Activated B cell treated with CpG ODN at 0.5 μM for 24 hours (primary cell): ENCODE measurements at regions of chr11 and their contacts with region 1.

Region 1: DNA sequence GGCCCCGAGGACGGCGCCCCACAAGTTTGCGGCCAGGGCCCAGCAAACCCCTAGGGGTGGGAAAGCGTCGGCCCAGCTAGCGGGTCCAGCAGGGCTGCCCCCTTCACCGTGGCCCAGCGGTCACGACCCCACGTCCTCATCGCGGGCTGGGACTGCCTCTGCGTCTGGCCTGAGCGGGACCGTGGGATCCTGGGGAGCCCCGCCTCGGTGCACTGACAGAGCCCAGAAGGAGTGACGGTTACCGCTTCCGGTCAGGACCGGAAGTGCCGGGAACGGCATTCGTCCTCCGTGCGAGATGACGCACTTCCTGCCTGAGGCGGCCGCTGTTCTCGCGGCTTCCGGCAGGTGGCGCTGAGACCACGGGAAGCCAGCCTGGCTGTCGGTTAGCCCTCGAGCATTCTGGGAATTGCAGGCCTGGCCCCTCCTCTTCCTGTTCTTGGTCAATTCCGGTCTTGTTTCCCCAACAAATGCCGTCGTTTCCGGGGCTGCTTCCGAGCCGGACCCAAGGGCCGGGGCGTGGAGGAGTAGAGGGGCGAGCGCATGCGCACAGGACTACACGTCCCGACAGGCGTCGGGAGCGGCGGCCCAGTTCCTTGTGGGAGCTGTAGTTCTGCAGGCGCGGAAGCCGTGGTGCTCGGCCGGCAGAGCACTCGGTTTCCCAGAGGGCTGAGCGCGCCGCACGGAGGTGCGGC is at the start of gene TSSC4:
- DNase-seq: peak; percentile 100
- ATAC-seq: peak; percentile 86
- H3K4me3 Mint-ChIP-seq: peak within 1 kb of the TSS; percentile 88
- H3K27ac Mint-ChIP-seq: peak within 1 kb of the TSS; percentile 83
- H3K4me1 Mint-ChIP-seq: peaks cover 27% of the 10 kb centered on the region
- H3K27me3 Mint-ChIP-seq: no peaks in the 10 kb centered on the region
- CTCF ChIP-seq: peak; percentile 73
- total RNA-seq, gene TSSC4: 59.4 and 59.7 TPM in 2 replicates

Region 2: GRCh38 chr11:1437500-1437899 is 962.7 kb before region 1 on chr11:
- CTCF ChIA-PET with region 1: no interaction called
- POLR2A ChIA-PET with region 1: no interaction called
- intact Hi-C with region 1: no loop called
- DNase-seq: no peak
- ATAC-seq: no peak
- H3K4me3 Mint-ChIP-seq: no peak overlapping the region
- H3K27ac Mint-ChIP-seq: no peak overlapping the region
- H3K4me1 Mint-ChIP-seq: no peaks in the 10 kb centered on the region
- H3K27me3 Mint-ChIP-seq: no peaks in the 10 kb centered on the region
- CTCF ChIP-seq: no peak

Region 3: DNA sequence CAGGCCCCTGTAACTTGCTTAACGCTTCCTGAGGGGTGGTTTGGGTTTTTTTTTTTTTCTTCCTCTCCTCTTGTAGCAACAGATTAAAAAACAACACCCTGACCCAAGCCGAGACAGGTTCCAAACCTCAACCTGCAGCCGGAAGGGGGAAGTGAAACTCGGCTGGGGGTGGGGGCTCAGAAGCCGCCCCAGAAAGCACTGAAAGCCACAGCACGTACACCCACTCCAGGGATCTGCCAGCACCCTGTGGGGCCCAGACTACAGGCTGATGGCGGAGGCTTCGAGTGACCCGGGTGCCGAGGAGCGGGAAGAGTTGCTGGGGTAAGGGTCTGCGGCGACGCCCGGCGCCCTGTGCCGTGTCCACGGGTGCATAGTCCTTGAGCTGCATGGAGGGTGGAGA is 547.3 kb before region 1 on chr11 and contains the start of gene LSP1:
- CTCF ChIA-PET with region 1: no interaction called
- POLR2A ChIA-PET with region 1: no interaction called
- intact Hi-C with region 1: loop called (anchors 2 kb)
- DNase-seq: peak; percentile 83
- ATAC-seq: peak; percentile 64
- H3K4me3 Mint-ChIP-seq: peak within 1 kb of the TSS; percentile 99
- H3K27ac Mint-ChIP-seq: peak within 1 kb of the TSS; percentile 98
- H3K4me1 Mint-ChIP-seq: peaks cover 84% of the 10 kb centered on the region
- H3K27me3 Mint-ChIP-seq: no peaks in the 10 kb centered on the region
- CTCF ChIP-seq: no peak
- total RNA-seq, gene LSP1: 301 and 303 TPM in 2 replicates

Region 4: GRCh38 chr11:2298795-2299761 is 101.1 kb before region 1 on chr11:
- CTCF ChIA-PET with region 1: interaction called, 5 read pairs
- POLR2A ChIA-PET with region 1: interaction called, 23 read pairs
- intact Hi-C with region 1: no loop called
- DNase-seq: peak; percentile 23
- ATAC-seq: no peak
- H3K4me3 Mint-ChIP-seq: peak overlapping the region; percentile 60
- H3K27ac Mint-ChIP-seq: peak overlapping the region; percentile 81
- H3K4me1 Mint-ChIP-seq: peaks cover 62% of the 10 kb centered on the region
- H3K27me3 Mint-ChIP-seq: no peaks in the 10 kb centered on the region
- CTCF ChIP-seq: no peak

Region 5: DNA sequence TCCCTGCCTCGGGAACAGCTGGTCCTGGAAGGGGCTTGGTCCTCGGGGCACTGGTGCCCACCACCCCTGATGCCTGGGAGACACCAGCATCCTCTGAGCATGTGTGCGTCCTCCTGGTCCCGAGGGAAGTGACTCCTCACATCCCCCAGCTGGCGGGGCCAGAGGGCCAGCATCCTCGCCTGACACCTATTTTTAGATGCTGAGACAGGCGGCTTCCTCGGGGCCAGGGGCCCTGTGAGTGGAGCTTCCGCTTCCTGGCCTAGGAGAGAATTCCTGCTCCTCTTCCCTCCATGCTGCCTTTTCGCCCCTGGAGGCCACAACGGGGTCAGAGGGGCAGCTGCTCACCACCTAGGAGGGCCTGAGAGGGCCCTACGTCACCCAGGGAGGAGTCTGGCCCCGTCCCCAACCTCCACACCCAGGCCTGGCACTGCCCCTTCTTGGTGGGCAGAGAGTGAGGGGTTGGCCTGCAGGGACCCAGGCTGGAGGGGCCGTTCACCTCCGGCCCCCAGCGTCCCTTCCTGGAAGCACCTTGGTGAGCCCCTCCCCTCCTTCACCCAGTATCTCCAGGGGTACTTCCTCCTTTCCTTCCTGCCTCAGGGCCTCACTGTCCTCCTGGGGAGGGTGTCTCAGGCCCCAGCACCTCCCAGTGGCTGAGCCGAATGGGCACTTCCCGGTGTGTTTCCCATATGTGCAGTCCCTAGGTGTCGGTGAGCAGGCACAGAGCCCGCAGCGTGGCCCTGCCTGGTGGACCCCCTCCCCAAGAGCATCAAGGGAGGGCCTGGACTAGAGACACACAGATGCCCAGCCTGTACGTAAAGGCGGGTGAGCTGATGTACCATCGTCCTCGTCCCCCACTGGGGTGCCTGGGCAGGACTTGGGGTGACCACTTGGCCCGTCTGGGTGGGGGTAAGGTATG is 17.0 kb before region 1 on chr11:
- CTCF ChIA-PET with region 1: no interaction called
- POLR2A ChIA-PET with region 1: interaction called, 91 read pairs
- intact Hi-C with region 1: loop called (anchors 1 kb)
- DNase-seq: no peak
- ATAC-seq: no peak
- H3K4me3 Mint-ChIP-seq: peak overlapping the region; percentile 58
- H3K27ac Mint-ChIP-seq: peak overlapping the region; percentile 84
- H3K4me1 Mint-ChIP-seq: peaks cover 93% of the 10 kb centered on the region
- H3K27me3 Mint-ChIP-seq: no peaks in the 10 kb centered on the region
- CTCF ChIP-seq: no peak

Region 6: GRCh38 chr11:2474061-2474901 is 74.1 kb after region 1 on chr11:
- CTCF ChIA-PET with region 1: no interaction called
- POLR2A ChIA-PET with region 1: no interaction called
- intact Hi-C with region 1: no loop called
- DNase-seq: no peak
- ATAC-seq: no peak
- H3K4me3 Mint-ChIP-seq: no peak overlapping the region
- H3K27ac Mint-ChIP-seq: no peak overlapping the region
- H3K4me1 Mint-ChIP-seq: peaks cover 2% of the 10 kb centered on the region
- H3K27me3 Mint-ChIP-seq: no peaks in the 10 kb centered on the region
- CTCF ChIP-seq: no peak

Region 7: GRCh38 chr11:2901854-2902783 is 501.9 kb after region 1 on chr11:
- CTCF ChIA-PET with region 1: no interaction called
- POLR2A ChIA-PET with region 1: interaction called, 4 read pairs
- intact Hi-C with region 1: loop called (anchors 1 kb)
- DNase-seq: peak; percentile 80
- ATAC-seq: peak; percentile 97
- H3K4me3 Mint-ChIP-seq: peak overlapping the region; percentile 80
- H3K27ac Mint-ChIP-seq: peak overlapping the region; percentile 24
- H3K4me1 Mint-ChIP-seq: peaks cover 28% of the 10 kb centered on the region
- H3K27me3 Mint-ChIP-seq: no peaks in the 10 kb centered on the region
- CTCF ChIP-seq: no peak

Region 8: DNA sequence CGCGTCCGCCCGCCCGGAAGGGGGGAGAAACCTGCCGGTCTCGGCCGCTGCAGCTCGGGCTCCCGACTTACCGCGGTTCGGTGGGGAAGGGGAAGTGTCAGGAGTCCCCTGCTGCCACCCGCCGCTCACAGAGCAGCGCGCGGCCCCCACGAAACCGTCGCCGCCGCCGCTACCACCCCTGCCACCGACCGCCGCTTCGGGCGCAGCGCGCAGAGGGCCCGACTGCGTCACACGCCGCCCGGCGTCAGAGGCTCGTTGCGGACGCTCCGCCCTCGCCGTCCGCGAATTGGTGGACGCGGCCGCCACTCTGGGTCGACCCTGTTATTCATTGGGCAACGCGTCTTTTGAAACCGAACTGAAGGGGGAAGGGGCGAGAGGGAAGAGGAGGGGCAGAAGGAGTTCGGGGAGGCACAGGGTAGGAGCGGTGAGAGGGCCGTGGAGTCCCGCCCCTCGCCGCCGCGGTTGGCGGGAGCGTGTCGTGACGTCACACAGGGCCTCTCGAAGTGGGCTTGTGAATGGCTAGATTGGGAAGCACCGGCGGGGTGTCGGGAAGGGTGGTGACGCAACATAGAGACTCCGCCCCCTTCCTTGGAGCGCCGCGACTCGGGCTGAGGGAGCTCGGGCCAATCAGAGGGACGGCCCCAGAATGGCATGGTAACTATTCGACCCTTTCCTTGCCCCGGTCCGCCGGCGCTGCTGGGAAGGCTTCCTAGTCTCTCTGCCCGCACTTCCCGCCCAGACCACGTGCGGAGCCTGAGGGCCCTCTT is 1397.3 kb after region 1 on chr11 and contains the start of gene NUP98:
- CTCF ChIA-PET with region 1: no interaction called
- POLR2A ChIA-PET with region 1: no interaction called
- intact Hi-C with region 1: loop called (anchors 5 kb)
- DNase-seq: peak; percentile 99
- ATAC-seq: peak; percentile 93
- H3K4me3 Mint-ChIP-seq: peak within 1 kb of the TSS; percentile 98
- H3K27ac Mint-ChIP-seq: peak within 1 kb of the TSS; percentile 99
- H3K4me1 Mint-ChIP-seq: peaks cover 43% of the 10 kb centered on the region
- H3K27me3 Mint-ChIP-seq: no peaks in the 10 kb centered on the region
- CTCF ChIP-seq: no peak
- total RNA-seq, gene NUP98: 98.0 and 117 TPM in 2 replicates